ENCODE measurements at regions of chr11 and their contacts with region 1.

Region 1: GRCh38 chr11:123246749-123247495 is 51.9 kb upstream of the CLMP start:
- DNase-seq: peak; percentile 92
- H3K4me3 Mint-ChIP-seq: no peak overlapping the region
- H3K27ac Mint-ChIP-seq: no peak overlapping the region
- H3K4me1 Mint-ChIP-seq: peaks cover 5% of the 10 kb centered on the region
- H3K27me3 Mint-ChIP-seq: peaks cover 2% of the 10 kb centered on the region

Region 2: DNA sequence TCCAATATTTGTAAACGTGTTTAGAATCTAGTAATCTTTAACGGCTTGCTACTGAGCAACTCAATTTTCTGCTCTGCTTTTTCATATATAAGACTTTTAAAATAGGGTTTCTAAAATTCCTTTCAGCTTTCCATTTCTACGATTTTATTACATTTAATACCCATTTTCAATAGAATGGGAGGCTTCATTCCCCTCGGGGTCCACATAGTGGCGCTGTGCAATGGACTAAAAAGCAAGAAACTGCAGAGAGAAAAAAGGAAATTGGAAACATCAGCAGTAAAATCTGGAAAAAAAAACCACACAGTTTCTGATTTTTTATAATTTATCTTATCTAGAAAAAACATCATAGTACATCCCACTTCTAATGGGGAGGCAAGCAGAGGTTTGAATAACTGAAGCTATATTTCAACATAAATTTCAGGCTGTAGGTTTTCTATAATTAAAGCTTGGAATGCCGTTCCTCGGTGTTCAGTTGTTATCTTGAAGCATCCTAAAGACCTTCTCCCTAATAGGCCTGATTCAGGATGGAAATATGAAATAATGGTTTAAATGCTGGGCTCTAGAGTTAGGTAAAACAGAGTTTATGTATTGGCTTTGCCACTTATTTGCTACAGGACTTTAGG is 383.1 kb before region 1 on chr11:
- CTCF ChIA-PET with region 1: no interaction called
- intact Hi-C with region 1: loop called (anchors 1 kb)
- DNase-seq: peak; percentile 73
- H3K4me3 Mint-ChIP-seq: no peak overlapping the region
- H3K27ac Mint-ChIP-seq: no peak overlapping the region
- H3K4me1 Mint-ChIP-seq: no peaks in the 10 kb centered on the region
- H3K27me3 Mint-ChIP-seq: no peaks in the 10 kb centered on the region

Region 3: DNA sequence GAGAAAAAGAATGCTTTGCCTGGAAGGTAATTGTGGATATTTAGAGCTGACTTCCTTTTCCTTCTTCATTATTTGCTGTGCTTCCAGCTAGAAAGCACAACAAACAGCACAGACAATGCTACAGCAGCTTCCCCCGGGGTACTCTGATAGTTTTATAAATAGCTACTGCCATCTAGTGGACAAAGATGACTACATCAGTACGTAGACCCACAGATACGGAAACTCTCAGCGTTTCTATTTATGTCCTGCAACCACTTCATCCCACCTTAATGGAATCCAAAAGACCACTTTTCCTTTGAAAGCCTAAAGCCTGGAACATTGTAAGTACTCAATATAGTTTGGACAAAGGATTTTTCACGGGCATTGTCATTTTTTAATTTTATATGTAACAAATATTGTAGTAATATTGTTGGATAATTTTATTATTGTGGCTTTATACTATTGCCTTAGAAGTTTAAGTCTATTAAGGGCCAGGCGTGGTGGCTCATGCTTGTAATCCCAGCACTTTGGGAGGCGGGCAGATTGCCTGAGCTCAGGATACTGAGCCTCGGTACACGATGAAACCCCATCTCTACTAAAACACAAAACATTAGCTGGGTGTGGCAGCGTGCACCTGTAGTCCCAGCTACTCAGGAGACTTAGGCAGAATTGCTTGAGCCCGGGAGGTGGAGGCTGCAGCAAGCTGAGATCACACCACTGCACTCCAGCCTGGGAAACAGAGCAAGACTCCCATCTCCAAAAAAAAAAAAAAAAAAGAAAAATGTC is 192.4 kb before region 1 on chr11:
- CTCF ChIA-PET with region 1: interaction called, 9 read pairs
- intact Hi-C with region 1: loop called (anchors 1 kb)
- DNase-seq: peak; percentile 17
- H3K4me3 Mint-ChIP-seq: no peak overlapping the region
- H3K27ac Mint-ChIP-seq: peak overlapping the region; percentile 70
- H3K4me1 Mint-ChIP-seq: peaks cover 37% of the 10 kb centered on the region
- H3K27me3 Mint-ChIP-seq: no peaks in the 10 kb centered on the region

Region 4: DNA sequence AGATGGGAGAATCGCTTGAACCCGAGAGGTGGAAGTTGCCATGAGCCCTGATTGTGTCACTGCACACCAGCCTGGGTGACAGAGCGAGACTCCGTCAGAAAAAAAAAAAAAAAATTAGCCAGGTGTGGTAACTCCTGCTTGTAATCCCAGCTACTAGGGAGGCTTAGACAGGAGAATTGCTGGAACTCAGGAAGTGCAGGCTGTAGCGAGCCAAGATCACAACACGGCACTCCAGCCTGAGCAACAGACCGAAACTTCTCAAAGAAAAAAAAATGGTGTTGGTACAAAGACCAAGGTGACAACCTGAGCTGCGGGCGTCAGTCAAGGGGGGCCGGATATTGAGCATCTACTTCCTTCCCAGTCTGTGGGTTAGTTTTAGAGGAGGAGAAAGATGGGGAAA is 136.6 kb before region 1 on chr11:
- CTCF ChIA-PET with region 1: interaction called, 130 read pairs
- intact Hi-C with region 1: loop called (anchors 1 kb)
- DNase-seq: no peak
- H3K4me3 Mint-ChIP-seq: peak overlapping the region; percentile 23
- H3K27ac Mint-ChIP-seq: no peak overlapping the region
- H3K4me1 Mint-ChIP-seq: peaks cover 4% of the 10 kb centered on the region
- H3K27me3 Mint-ChIP-seq: no peaks in the 10 kb centered on the region

Region 5: GRCh38 chr11:123166071-123166559 is 80.8 kb before region 1 on chr11:
- CTCF ChIA-PET with region 1: interaction called, 8 read pairs
- intact Hi-C with region 1: loop called (anchors 5 kb)
- DNase-seq: peak; percentile 46
- H3K4me3 Mint-ChIP-seq: no peak overlapping the region
- H3K27ac Mint-ChIP-seq: no peak overlapping the region
- H3K4me1 Mint-ChIP-seq: no peaks in the 10 kb centered on the region
- H3K27me3 Mint-ChIP-seq: no peaks in the 10 kb centered on the region

Region 6: DNA sequence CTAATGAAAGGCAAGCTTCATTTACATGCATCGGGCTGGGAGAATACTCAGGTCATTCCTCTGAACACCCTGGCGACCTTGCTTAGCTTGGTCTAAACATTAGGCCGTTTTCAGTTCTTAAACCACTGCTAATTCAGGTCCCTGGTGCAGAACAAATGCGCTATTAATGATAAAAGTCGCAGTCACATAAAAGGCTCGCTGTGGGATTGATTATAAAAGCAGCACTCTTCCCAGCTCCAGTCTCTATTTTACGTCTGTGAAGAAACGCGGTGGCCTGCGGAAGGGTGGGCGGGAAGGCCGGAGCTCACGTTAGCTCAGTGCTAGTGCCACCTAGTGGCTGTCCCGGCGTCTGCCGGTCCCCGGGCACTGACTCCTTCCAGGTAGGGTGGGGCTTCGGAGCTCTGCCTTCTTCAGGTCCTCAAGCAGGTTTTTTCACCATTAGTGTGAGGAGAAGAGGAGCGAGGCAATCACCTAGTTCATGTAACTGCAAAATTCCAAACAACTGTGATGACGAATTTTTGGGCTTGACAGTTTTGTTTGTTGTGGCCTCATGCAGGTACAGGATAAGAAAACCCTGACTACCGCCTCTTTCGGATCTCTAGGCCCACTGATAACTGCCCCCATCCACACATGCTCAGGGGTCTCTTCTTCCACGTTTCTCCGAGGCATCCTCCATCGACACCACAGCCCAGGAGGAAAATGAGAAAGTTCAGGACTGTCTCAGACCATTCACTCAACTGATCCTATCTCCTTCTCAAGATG is 14.6 kb after region 1 on chr11:
- CTCF ChIA-PET with region 1: interaction called, 30 read pairs
- intact Hi-C with region 1: no loop called
- DNase-seq: peak; percentile 83
- H3K4me3 Mint-ChIP-seq: no peak overlapping the region
- H3K27ac Mint-ChIP-seq: no peak overlapping the region
- H3K4me1 Mint-ChIP-seq: peaks cover 7% of the 10 kb centered on the region
- H3K27me3 Mint-ChIP-seq: peaks cover 23% of the 10 kb centered on the region

Region 7: DNA sequence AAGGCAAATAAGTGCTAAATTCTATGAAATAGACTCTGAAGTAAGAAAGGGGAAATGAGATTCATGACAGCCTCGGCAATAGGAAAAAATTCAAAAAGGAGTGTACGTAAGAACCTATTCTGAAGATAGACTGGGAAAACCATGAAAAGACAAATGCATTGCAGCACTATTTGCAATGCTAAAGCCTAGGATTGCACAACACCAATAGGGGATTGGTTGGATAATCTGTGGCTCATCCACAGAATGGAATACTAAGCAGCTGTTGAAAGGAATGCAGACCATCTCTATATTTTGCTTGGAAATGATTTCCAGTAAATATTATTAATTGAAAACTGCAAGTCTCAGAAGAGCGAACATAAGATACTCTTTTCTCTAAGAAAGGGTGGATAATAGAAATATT is 39.8 kb after region 1 on chr11:
- CTCF ChIA-PET with region 1: no interaction called
- intact Hi-C with region 1: no loop called
- DNase-seq: no peak
- H3K4me3 Mint-ChIP-seq: no peak overlapping the region
- H3K27ac Mint-ChIP-seq: no peak overlapping the region
- H3K4me1 Mint-ChIP-seq: no peaks in the 10 kb centered on the region
- H3K27me3 Mint-ChIP-seq: peaks cover 10% of the 10 kb centered on the region

Measured in activated naive CD4-positive, alpha-beta T cell treated with anti-CD3 and anti-CD28 coated beads for 36 hours (primary cell).